Activated CD4-positive, alpha-beta memory T cell treated with anti-CD3 and anti-CD28 coated beads for 36 hours (primary cell): ENCODE measurements at regions of chr14 and their contacts with region 1.

Region 1: GRCh38 chr14:39102969-39103957 is at the start of gene SEC23A:
- DNase-seq: peak; percentile 90
- H3K4me3 Mint-ChIP-seq: peak within 1 kb of the TSS; percentile 96
- H3K27ac Mint-ChIP-seq: peak within 1 kb of the TSS; percentile 96
- H3K4me1 Mint-ChIP-seq: peaks cover 42% of the 10 kb centered on the region
- H3K27me3 Mint-ChIP-seq: no peaks in the 10 kb centered on the region
- total RNA-seq, gene SEC23A: 52.4 to 54.9 TPM

Region 2: GRCh38 chr14:39006721-39007410 is 96.4 kb before region 1 on chr14:
- CTCF ChIA-PET with region 1: no interaction called
- POLR2A ChIA-PET with region 1: no interaction called
- intact Hi-C with region 1: no loop called
- DNase-seq: no peak
- H3K4me3 Mint-ChIP-seq: no peak overlapping the region
- H3K27ac Mint-ChIP-seq: no peak overlapping the region
- H3K4me1 Mint-ChIP-seq: no peaks in the 10 kb centered on the region
- H3K27me3 Mint-ChIP-seq: peaks cover 5% of the 10 kb centered on the region

Region 3: GRCh38 chr14:39174560-39175444 is 71.5 kb after region 1 on chr14 and contains the start of gene PNN:
- CTCF ChIA-PET with region 1: no interaction called
- POLR2A ChIA-PET with region 1: interaction called, 8 read pairs
- intact Hi-C with region 1: loop called (anchors 1 kb)
- DNase-seq: peak; percentile 98
- H3K4me3 Mint-ChIP-seq: peak within 1 kb of the TSS; percentile 89
- H3K27ac Mint-ChIP-seq: peak within 1 kb of the TSS; percentile 95
- H3K4me1 Mint-ChIP-seq: peaks cover 32% of the 10 kb centered on the region
- H3K27me3 Mint-ChIP-seq: no peaks in the 10 kb centered on the region
- total RNA-seq, gene PNN: 85.3 to 88.8 TPM

Region 4: DNA sequence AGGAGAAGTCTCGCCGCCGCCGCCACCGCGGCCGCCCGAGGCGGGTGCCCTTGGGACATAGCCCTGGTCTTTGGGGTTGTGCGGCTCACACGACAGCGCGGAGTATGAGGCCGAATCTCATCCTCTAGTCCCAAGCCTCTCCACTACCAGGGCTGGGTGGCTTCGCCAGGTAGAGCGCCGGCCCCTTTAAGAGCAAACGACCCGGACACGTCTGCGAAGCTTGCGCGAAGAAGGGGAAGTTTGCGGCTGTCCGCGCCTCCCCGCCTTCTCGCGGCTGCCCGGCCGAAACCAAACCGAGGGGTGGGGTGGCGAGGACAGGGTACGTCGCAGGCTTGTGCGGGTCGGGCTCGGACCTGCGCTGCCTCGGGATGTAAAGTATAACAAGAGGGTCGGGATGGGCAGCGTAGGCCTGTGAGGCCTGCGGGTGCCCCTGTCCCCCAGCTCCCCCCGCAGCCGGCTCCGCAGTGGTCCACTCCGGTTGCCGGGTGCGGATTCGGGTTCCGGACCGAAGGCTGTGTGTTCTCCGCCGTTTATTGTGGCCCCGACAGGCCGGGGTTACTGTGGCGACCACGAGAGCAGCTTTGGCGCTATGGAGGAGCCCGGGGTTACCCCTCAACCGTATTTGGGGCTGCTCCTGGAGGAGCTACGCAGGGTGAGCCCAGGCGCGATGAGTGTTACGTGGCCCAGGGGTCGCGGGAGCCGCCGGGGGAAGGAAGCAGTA is 163.8 kb after region 1 on chr14:
- CTCF ChIA-PET with region 1: no interaction called
- POLR2A ChIA-PET with region 1: interaction called, 5 read pairs
- intact Hi-C with region 1: loop called (anchors 1 kb)
- DNase-seq: peak; percentile 79
- H3K4me3 Mint-ChIP-seq: peak overlapping the region; percentile 84
- H3K27ac Mint-ChIP-seq: peak overlapping the region; percentile 90
- H3K4me1 Mint-ChIP-seq: peaks cover 46% of the 10 kb centered on the region
- H3K27me3 Mint-ChIP-seq: no peaks in the 10 kb centered on the region

Region 5: GRCh38 chr14:39368261-39368959 is 265.1 kb after region 1 on chr14:
- CTCF ChIA-PET with region 1: interaction called, 3 read pairs
- POLR2A ChIA-PET with region 1: no interaction called
- intact Hi-C with region 1: loop called (anchors 1 kb)
- DNase-seq: peak; percentile 47
- H3K4me3 Mint-ChIP-seq: no peak overlapping the region
- H3K27ac Mint-ChIP-seq: no peak overlapping the region
- H3K4me1 Mint-ChIP-seq: no peaks in the 10 kb centered on the region
- H3K27me3 Mint-ChIP-seq: no peaks in the 10 kb centered on the region

Region 6: DNA sequence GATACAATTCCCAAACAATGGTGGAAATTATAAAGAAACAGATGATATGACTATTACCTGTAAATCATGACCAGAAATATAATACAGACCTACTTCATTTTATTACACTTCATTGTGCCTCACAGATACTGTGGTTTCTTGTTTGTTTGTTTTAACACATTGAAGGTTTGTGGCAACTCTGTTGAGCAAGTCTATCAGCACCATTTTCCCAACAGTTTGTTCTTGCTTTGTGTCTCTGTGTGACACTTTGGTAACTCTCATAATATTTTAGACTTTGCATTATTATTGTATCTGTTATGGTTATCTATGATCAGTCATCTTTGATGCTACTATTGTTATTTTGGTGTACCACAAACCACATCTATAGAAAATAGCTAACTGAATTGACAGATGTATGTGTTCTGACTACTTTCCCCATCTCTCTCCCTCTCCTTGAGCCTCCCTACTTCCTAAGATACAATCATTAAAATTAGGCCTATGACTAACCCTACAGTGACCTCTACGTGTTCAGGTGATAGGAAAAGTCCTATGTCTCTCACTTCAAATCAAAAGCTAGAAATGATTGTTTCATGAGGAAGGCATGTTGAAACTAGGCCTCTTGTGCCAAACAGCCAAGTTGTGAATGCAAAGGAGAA is 279.9 kb after region 1 on chr14:
- CTCF ChIA-PET with region 1: no interaction called
- POLR2A ChIA-PET with region 1: no interaction called
- intact Hi-C with region 1: loop called (anchors 1 kb)
- DNase-seq: no peak
- H3K4me3 Mint-ChIP-seq: no peak overlapping the region
- H3K27ac Mint-ChIP-seq: no peak overlapping the region
- H3K4me1 Mint-ChIP-seq: peaks cover 24% of the 10 kb centered on the region
- H3K27me3 Mint-ChIP-seq: no peaks in the 10 kb centered on the region